Activated CD4-positive, alpha-beta T cell treated with anti-CD3 and anti-CD28 coated beads, Interleukin-2, amount 10 ng/mL, durations not matched to agents 24 days and 14 days (primary cell): ENCODE measurements at regions of chr1 and their contacts with region 1.

Region 1: DNA sequence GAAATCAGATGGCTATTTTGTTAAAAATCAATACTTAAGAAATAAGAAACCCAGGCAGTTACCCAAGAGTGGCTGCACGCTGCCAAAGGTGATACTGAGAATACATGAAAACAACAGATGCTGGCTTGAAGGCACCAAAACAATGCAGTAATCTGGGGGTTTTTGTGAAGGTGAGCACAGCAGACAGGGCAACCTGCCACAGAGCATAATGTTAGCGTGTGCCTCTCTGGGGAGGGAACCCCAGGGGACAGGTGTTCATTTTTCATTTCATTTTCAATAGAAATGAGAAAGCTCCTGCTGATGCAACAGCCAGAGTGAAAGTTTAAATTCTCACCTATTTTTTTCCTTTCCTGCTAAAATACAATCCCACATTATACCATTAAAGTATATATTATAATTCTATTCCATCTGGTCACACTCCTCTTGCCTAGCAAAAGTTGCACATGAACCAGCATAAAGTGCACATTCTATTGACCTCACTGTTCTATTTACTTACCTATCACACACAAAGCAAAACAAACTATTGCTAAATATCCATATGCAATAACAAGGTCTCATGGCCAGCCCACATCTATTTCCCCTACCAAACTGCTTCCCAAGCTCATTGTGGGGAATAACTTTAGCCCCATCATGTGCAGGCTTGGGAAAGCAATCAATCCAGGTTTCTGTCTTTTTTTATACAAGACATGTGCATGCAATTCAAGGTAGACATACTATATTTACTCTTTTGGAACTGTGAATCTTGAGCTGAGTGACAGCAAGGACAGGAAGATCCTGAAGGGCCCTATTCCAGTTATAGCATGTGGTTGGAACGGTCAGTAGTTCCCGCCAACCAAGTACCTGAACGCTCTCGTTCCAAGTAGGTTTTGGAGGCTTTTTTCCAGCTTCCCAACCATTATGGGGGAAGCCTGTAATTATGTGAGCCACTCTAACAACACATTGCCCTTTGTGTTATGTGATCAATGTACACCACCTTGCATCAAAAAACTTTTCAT is 173.6 kb downstream of the RERE start:
- DNase-seq: no peak
- H3K4me3 Mint-ChIP-seq: no peak overlapping the region
- H3K27ac Mint-ChIP-seq: peak overlapping the region; percentile 28
- H3K4me1 Mint-ChIP-seq: peaks cover 39% of the 10 kb centered on the region
- H3K27me3 Mint-ChIP-seq: no peaks in the 10 kb centered on the region

Region 2: DNA sequence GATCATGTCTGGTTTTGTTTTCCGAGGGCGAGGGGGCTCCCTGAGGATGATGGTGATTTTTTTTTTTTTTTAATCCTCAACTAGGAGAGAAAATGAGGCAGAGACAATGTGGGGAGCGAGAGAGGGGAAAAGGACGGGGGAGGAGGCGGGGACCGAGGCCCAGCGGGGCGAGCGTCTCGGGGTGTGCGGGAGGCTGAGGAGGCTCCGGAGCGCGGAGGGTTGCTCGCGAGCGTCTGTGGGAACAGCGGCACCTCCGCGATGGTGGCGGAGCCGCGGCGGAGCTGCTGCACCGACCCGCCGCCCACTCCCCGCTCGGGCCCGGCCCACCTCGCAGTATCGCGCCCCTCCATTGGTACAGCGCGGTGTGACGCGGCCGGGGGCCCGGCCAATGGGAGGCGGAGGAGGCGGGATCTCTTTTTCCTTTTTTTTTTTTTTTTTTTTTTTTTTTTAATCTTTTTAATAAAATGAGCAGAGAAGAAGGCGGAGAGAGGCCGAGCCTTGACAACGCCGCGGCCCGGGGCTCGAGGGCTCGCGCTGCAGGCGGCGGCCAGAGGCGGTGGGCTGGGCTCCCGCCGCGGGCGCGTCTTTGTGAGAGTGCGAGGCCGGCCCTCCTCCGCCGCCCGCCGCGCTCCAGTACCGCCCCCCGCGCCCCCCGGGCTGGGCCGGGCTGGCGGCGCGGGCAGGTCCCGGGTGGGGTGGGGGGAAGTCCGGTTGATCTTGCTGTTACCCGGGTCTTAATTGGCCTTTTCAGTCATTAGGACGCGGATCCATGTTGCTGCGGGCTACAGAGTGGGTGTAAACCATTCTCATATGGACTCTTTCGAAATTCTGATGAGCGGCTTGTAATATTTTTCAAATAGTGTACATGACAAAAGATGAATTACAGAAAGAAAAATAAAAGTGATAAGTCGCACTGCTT is 173.8 kb after region 1 on chr1 and contains the start of gene RERE:
- intact Hi-C with region 1: loop called (anchors 10 kb)
- DNase-seq: peak; percentile 99
- H3K4me3 Mint-ChIP-seq: peak within 1 kb of the TSS; percentile 96
- H3K27ac Mint-ChIP-seq: peak within 1 kb of the TSS; percentile 92
- H3K4me1 Mint-ChIP-seq: peaks cover 37% of the 10 kb centered on the region
- H3K27me3 Mint-ChIP-seq: peaks cover 7% of the 10 kb centered on the region
- total RNA-seq, gene RERE: 69.3 and 85.6 TPM in 2 replicates